HepG2 (cell line): ENCODE measurements at regions of chr1 and their contacts with region 1.

Region 1: DNA sequence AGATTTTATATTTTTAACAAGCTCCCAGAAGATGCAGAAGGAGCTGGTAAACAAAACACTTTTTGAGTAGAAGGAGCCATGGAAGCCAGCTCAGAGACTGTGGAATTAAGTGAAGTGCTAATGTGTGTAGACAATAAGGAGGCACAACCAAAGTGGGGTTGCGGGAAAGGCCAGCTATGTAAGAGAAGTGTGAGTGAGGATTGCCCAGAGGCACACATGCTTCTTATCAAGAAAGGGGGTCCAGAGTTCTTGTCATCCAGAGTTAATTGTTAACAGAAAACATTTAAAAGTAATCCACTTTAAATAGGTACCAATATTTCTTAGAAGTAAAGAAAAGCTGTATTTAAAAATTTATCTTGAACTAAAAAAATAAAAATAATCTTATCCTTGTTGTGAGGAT is 136.8 kb downstream of the OLFM3 start:
- DNase-seq: no peak
- ATAC-seq: no peak
- H3K4me3 ChIP-seq: no peak overlapping the region
- H3K27ac ChIP-seq: no peak overlapping the region
- H3K4me1 ChIP-seq: no peaks in the 10 kb centered on the region; the same call in 1 of the 2 replicates
- H3K27me3 ChIP-seq: no peaks in the 10 kb centered on the region; a peak in 1 of 5 replicates
- CTCF ChIP-seq: no peak
- EP300 ChIP-seq: no peak
- POLR2A ChIP-seq: no peak
- RAD21 ChIP-seq: no peak

Region 2: DNA sequence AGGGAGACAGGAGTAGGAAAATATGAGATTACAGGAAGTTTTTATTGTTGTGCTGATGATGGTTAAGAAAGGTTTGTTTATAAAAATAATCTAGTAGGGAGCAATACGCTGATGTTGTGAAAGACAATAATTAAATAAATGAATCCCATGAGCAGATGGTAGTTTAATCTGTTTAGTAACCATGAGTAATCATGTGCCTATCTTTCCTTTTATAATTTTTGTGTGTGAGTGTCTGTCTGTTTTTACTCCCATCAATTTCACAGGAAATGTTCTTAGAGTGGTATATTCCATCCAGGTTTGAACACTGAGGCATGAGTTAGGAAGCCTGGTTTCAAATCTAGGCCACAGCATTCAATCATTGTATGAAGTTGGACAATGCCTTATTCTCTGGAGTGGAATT is 43.7 kb before region 1 on chr1:
- CTCF ChIA-PET with region 1: no interaction called
- POLR2A ChIA-PET with region 1: no interaction called
- in situ Hi-C with region 1: no loop called
- intact Hi-C with region 1: no loop called
- DNase-seq: no peak
- ATAC-seq: no peak
- H3K4me3 ChIP-seq: no peak overlapping the region
- H3K27ac ChIP-seq: no peak overlapping the region
- H3K4me1 ChIP-seq: no peaks in the 10 kb centered on the region
- H3K27me3 ChIP-seq: no peaks in the 10 kb centered on the region
- CTCF ChIP-seq: no peak
- EP300 ChIP-seq: no peak
- POLR2A ChIP-seq: no peak
- RAD21 ChIP-seq: no peak

Region 3: DNA sequence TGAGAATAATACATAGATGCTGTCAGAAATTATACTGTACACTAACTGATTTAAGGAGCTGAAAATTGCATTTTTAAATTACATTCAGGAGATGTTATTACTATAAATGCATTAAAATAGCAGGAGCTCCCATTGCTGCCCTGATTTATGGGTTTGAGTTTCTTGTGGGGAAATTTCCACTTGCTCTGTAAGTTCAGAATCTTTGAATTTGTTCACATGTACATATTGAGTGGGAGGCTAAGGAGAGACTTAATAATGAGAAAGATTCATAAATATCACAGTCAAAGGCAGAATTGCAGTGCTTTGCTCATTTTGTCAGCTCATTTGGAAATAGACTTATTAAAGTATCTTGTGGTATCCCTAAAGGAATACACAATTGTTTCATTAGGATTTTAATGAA is 33.5 kb before region 1 on chr1:
- CTCF ChIA-PET with region 1: no interaction called
- POLR2A ChIA-PET with region 1: no interaction called
- in situ Hi-C with region 1: no loop called
- intact Hi-C with region 1: loop called (anchors 1 kb)
- DNase-seq: no peak
- ATAC-seq: no peak
- H3K4me3 ChIP-seq: no peak overlapping the region
- H3K27ac ChIP-seq: no peak overlapping the region
- H3K4me1 ChIP-seq: no peaks in the 10 kb centered on the region
- H3K27me3 ChIP-seq: no peaks in the 10 kb centered on the region
- CTCF ChIP-seq: no peak
- EP300 ChIP-seq: no peak
- POLR2A ChIP-seq: no peak
- RAD21 ChIP-seq: no peak

Region 4: DNA sequence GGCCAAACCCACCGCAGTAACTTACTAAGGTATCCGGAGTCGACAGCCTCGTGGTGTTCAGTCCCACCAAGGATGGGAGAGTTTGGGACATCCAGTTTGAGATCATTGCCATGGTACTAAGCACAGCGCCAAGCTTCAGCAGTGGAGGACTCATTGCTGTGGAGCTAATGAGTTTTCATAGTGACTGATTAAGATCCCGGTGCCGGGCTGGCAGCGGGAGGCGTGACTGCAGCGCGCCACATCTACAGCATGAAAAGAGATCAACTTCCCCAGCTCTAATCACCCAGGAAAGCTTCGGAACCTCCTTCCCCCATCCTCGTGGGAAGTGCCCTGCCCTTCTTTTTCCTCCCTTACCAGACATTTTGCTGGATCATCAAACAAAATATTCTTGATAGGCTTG is 13.1 kb before region 1 on chr1:
- CTCF ChIA-PET with region 1: no interaction called
- POLR2A ChIA-PET with region 1: no interaction called
- in situ Hi-C with region 1: no loop called
- intact Hi-C with region 1: no loop called
- DNase-seq: no peak
- ATAC-seq: no peak
- H3K4me3 ChIP-seq: no peak overlapping the region
- H3K27ac ChIP-seq: no peak overlapping the region
- H3K4me1 ChIP-seq: no peaks in the 10 kb centered on the region
- H3K27me3 ChIP-seq: no peaks in the 10 kb centered on the region
- CTCF ChIP-seq: no peak
- EP300 ChIP-seq: no peak
- POLR2A ChIP-seq: no peak
- RAD21 ChIP-seq: no peak